ENCODE measurements at regions of chr19 and their contacts with region 1.

Region 1: DNA sequence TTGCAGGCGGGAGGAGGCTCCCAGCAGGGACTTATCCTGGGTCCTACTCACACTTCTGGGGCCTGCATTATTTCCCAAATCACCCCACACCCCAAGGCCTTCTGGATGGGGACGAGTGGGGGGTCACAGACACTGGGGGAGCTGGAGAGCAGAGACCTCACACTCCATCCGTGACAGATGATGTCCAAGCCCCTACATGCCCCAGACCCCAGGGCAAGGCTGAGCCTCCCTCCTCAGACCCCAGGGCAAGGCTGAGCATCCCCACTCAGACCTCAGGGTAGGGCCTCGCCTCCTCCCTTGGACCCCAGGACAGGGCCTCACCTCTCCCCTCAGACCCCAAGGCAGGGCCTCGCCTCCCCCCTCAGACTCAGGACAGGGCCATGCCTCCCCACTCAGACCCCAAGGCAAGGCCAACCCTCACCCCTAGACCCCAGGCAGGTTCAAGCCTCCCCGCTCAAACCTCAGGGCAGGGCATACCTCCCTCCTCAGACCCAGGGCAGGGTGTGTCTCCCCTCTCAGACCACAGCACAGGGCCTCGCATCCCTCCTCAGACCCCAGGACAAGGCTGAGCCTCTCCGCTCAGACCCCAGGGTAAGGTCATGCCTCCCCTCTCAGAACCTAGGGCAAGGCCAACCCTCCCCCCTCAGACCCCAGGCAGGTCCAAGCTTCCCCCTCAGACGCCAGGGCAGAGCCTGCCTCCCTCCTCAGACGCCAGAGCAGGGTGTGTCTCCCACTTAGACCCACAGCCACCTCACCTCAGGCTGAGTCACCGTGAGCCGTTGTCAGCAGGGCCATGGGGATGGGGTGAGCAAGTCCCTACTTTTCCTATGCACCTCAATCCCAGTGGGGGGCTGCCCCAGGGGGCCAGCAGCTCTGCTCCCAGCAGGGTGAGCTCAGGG is 1.7 kb upstream of the S1PR4 start:
- DNase-seq: peak; percentile 43 to 86 (median 82)
- ATAC-seq: peak; percentile 68
- H3K4me3 ChIP-seq: peak overlapping the region; percentile 45 to 66
- H3K4me3 Mint-ChIP-seq: peak overlapping the region; percentile 62
- H3K27ac ChIP-seq: peak overlapping the region; percentile 62 to 90
- H3K27ac Mint-ChIP-seq: peak overlapping the region; percentile 98
- H3K4me1 ChIP-seq: peaks cover 26% of the 10 kb centered on the region
- H3K4me1 Mint-ChIP-seq: peaks cover 26% of the 10 kb centered on the region
- H3K27me3 ChIP-seq: no peaks in the 10 kb centered on the region
- H3K27me3 Mint-ChIP-seq: no peaks in the 10 kb centered on the region
- CTCF ChIP-seq: no peak

Region 2: DNA sequence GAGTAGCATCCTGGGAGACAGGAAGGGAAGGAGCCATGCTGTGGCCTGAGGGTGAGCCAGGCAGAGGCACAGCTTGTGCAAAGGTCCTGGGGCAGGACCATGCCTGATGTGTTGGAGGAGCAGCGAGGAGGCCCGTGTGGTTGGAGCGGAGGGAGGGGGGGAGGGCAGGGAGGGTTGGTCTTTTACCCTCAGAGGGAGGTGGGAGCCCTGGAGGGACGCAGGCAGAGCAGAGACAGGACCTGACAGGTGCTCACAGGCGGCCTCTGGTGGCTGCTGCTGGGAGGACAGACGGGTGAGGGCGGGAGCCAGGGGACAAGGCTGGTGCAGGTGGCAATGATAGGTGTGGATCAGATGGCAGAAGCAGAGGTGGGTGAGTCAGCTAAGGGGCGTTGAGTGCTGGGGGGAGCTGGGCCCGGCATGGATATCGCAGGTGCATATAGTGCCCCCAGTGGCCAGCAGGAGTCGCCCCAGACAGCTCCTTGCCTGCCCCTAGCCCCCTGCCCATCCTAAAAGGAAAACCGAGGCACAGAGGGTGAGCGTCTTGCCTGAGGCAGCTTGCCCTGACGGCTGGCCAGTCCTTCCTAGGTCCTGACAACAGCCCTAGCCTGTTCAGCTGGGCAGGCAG is 50.8 kb before region 1 on chr19:
- CTCF ChIA-PET with region 1: no interaction called
- POLR2A ChIA-PET with region 1: interaction called, 3 read pairs
- intact Hi-C with region 1: loop called in 1 of 2 experiments (anchors 5 kb)
- DNase-seq: peak; percentile 58 to 80 (median 71)
- ATAC-seq: peak; percentile 97
- H3K4me3 ChIP-seq: no peak overlapping the region
- H3K4me3 Mint-ChIP-seq: no peak overlapping the region
- H3K27ac ChIP-seq: no peak overlapping the region
- H3K27ac Mint-ChIP-seq: no peak overlapping the region
- H3K4me1 ChIP-seq: no peaks in the 10 kb centered on the region
- H3K4me1 Mint-ChIP-seq: peaks cover 2% of the 10 kb centered on the region
- H3K27me3 ChIP-seq: peaks cover 0 to 3% of the 10 kb centered on the region in 2 experiments
- H3K27me3 Mint-ChIP-seq: peaks cover 2% of the 10 kb centered on the region
- CTCF ChIP-seq: peak; percentile 66

Region 3: GRCh38 chr19:3132971-3133792 is 43.7 kb before region 1 on chr19:
- CTCF ChIA-PET with region 1: no interaction called
- POLR2A ChIA-PET with region 1: interaction called, 3 read pairs
- intact Hi-C with region 1: loop called (anchors 2 to 5 kb)
- DNase-seq: peak; percentile 50 to 92 (median 68)
- ATAC-seq: peak; percentile 96
- H3K4me3 ChIP-seq: no peak overlapping the region
- H3K4me3 Mint-ChIP-seq: peak overlapping the region; percentile 66
- H3K27ac ChIP-seq: peak overlapping the region; percentile 30 to 60
- H3K27ac Mint-ChIP-seq: peak overlapping the region; percentile 68
- H3K4me1 ChIP-seq: peaks cover 17% of the 10 kb centered on the region
- H3K4me1 Mint-ChIP-seq: peaks cover 20% of the 10 kb centered on the region
- H3K27me3 ChIP-seq: peaks cover 0 to 3% of the 10 kb centered on the region in 2 experiments
- H3K27me3 Mint-ChIP-seq: peaks cover 8% of the 10 kb centered on the region
- CTCF ChIP-seq: no peak

Region 4: DNA sequence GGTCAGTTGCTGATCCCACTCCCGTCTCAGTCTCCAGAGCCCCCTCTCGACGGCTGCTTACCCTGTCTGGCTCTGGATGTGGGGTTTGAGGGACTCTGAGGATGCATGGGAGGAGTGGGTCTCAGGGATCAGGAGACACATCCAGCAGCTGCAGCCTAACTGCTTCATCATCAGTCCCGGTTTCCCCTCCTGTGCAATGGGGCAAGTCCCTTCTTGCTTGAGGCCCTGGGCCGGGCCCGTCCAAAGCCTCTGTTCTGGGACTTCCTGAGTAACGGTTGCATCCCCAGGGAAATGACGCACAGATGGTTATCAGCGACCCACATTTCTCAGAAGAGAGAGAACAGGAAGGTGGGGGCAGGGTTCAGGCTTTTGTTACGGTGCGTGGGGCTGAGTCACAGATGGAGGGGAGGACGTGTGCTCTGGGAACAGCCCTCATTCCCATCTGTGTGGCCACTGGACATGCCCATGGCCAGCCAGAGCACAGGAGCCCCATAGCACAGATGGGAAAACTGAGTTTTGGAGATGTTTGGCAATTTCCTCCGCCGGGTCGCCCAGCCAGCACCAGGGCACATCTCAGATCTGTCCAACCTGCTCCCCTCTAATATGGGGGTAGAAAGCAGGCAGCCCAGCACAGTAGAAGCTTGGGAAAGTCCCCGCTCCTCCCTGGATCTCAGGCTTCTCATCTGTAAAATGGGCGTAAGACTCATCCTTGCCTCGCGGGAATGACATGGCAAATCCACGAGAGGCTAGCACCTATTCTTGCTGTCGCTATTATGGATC is 21.7 kb before region 1 on chr19:
- CTCF ChIA-PET with region 1: no interaction called
- POLR2A ChIA-PET with region 1: no interaction called
- intact Hi-C with region 1: no loop called
- DNase-seq: peak; percentile 57 to 92 (median 75)
- ATAC-seq: peak; percentile 91
- H3K4me3 ChIP-seq: peak overlapping the region in 1 of 2 experiments; percentile 12
- H3K4me3 Mint-ChIP-seq: peak overlapping the region; percentile 54
- H3K27ac ChIP-seq: peak overlapping the region; percentile 25 to 55
- H3K27ac Mint-ChIP-seq: peak overlapping the region; percentile 81
- H3K4me1 ChIP-seq: peaks cover 19% of the 10 kb centered on the region
- H3K4me1 Mint-ChIP-seq: no peaks in the 10 kb centered on the region
- H3K27me3 ChIP-seq: no peaks in the 10 kb centered on the region
- H3K27me3 Mint-ChIP-seq: no peaks in the 10 kb centered on the region
- CTCF ChIP-seq: no peak

Measured in CD8-positive, alpha-beta T cell (primary cell).